ENCODE measurements at regions of chr3 and their contacts with region 1.

Region 1: DNA sequence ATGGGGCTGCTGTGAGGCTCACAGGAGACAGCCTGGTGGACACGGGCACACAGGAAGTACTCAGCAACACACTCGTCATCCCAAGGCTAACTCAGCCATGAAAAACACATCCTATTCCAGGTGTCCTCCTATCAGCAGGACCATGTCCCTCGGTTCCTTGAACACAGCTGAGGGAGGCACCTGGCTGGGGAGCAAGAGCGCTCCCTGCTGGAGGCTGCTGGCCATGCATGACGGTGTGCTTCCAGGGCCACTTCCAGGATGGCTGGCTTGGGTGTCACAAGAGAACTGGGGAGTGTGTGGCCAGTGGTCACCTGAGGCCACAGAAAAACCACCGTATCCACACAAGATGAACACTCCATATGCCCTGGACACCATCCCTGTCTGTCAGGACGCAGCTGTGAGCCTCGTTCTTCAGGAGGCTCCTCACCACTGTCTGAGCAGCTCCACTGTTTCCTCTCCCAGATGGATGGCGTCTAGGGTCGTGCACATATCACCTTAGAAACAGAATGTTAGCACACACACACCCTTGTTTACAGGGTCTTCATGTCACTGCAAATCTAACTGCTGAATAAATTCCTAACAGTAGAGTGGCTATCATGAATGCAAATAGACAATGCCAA is 31.0 kb downstream of the POC1A start:
- DNase-seq: peak; percentile 55
- H3K27ac ChIP-seq: peak overlapping the region; percentile 35
- CTCF ChIP-seq: peak; percentile 83

Region 2: DNA sequence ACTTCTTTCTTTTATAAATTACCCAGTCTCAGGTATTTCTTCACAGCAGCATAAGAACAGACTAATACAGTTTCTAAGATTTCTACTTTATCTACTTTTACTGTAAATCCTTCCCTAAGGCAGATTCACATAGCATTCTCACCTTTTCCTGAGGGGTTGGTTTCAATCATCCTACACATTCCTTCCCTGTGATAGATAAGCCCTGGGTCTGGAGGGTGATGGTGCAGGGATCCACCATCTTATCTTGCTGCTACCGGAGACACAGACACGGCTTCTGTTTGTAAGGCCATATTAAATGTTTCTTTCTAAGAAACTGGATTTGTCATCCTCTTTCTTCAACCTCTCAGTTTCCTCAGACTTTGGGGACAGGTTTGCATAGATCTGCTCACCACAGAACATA is 253.9 kb before region 1 on chr3:
- CTCF ChIA-PET with region 1: no interaction called
- POLR2A ChIA-PET with region 1: no interaction called
- DNase-seq: no peak
- H3K27ac ChIP-seq: no peak overlapping the region
- CTCF ChIP-seq: no peak

Region 3: DNA sequence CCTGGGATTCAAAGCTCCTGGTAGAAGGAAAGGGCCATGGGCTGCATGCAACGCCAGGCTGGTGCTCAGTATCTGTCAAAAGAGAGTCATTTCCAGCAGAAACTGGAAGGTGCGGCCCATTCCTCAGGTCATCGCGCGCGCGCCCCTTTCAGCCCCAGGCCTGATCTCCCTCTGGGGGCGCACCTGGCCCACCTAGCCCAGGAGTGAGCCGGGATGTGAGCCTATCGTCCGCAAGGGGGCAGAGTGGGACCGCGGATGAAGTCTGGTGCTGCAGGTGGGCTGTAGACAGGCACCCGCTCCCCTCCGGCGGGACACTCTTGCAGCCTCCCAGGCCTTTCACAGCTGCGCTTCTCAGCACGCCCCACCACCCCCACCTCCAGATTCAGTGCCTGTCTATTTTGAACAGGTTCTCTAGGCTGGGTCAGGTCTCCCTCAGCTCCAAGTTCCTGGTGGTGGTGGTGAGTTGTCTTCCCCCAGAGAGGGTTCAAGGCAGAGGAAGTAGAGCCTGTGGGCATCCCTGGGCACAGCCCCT is 121.7 kb before region 1 on chr3:
- CTCF ChIA-PET with region 1: interaction called, 12 read pairs
- POLR2A ChIA-PET with region 1: no interaction called
- DNase-seq: peak; percentile 81
- H3K27ac ChIP-seq: peak overlapping the region; percentile 58
- CTCF ChIP-seq: peak; percentile 95

Measured in RWPE1 (cell line).